ENCODE measurements at regions of chr16 and their contacts with region 1.

Region 1: DNA sequence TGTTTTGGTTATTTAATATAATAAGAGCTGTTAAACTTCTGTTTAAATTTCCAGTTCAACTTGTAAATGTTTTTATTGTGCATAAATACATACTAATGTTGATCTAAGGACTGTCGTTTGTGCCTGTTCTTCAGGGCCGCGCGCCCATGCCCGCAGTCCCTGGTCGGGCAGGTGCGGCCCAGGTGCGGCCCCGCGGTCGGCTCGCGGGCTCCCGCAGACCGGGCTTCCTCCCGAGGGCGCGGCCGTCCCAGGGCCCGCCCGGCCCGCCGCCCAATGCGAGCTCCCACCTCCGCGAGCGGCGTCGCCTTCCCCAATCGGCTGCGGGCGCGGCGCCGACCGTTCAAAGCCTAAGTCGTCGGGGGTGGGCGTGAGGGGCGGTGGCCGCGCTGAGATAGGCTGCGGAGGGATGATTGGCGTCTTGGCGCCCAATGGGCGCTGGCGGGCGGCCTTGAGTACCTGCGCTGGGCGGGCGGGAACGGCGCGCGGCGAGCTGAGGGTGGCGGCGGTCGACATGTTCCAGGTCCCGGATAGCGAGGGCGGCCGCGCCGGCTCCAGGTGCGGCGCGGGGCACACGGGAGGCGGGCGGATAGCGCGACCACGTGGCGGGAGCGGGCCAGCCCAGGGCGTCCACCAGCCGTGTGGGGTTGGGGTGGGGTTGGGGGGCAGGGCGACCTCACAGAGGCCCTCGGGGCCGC is at the start of gene JPT2:
- DNase-seq: peak; percentile 98
- H3K4me3 Mint-ChIP-seq: peak within 1 kb of the TSS; percentile 97
- H3K27ac Mint-ChIP-seq: peak within 1 kb of the TSS; percentile 79
- H3K4me1 Mint-ChIP-seq: peaks cover 29% of the 10 kb centered on the region
- H3K27me3 Mint-ChIP-seq: no peaks in the 10 kb centered on the region
- total RNA-seq, gene JPT2: 62.1 to 65.9 TPM

Region 2: GRCh38 chr16:1645914-1646525 is 31.9 kb before region 1 on chr16:
- CTCF ChIA-PET with region 1: no interaction called
- POLR2A ChIA-PET with region 1: no interaction called
- intact Hi-C with region 1: loop called (anchors 2 kb)
- DNase-seq: peak; percentile 57
- H3K4me3 Mint-ChIP-seq: no peak overlapping the region
- H3K27ac Mint-ChIP-seq: peak overlapping the region; percentile 55
- H3K4me1 Mint-ChIP-seq: peaks cover 18% of the 10 kb centered on the region
- H3K27me3 Mint-ChIP-seq: no peaks in the 10 kb centered on the region

Region 3: GRCh38 chr16:1656808-1657617 is 20.9 kb before region 1 on chr16:
- CTCF ChIA-PET with region 1: no interaction called
- POLR2A ChIA-PET with region 1: no interaction called
- intact Hi-C with region 1: no loop called
- DNase-seq: no peak
- H3K4me3 Mint-ChIP-seq: no peak overlapping the region
- H3K27ac Mint-ChIP-seq: no peak overlapping the region
- H3K4me1 Mint-ChIP-seq: no peaks in the 10 kb centered on the region
- H3K27me3 Mint-ChIP-seq: no peaks in the 10 kb centered on the region

Region 4: DNA sequence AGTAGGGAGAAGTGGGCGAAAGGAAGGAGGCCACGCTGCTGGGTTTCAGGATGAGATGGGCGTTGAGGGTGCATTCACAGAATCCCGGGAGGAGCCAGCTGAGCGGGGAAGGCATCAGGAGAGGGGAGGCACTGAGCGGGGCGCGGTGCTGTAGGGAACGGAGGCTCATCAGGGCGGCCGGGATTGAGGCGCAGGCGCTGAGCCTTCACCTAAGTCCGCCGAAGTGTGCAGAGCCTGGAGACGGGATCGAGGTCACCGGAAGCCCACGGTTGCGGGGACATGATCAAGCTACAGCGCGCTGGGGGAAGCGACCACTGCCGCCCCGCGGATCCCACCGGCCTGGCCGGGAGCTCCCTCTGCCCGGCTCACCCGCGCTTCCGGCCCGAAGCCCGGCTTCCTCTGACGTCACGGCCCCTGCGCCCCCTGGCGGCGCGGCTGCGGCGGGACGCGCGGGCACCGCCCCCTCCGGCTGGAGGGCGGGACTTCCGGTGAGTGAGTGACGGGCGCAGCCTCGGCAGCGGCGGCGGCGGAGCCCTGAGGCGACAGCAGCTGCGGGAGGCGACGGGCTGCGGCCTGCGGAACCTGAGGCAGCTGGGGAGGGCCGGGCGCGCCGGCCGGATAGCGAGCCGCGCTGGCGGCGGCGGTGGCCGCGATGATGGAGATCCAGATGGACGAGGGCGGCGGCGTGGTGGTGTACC is 27.9 kb after region 1 on chr16 and contains the start of gene MAPK8IP3:
- CTCF ChIA-PET with region 1: interaction called, 22 read pairs
- POLR2A ChIA-PET with region 1: interaction called, 18 read pairs
- intact Hi-C with region 1: loop called (anchors 2 kb)
- DNase-seq: peak; percentile 95
- H3K4me3 Mint-ChIP-seq: peak within 1 kb of the TSS; percentile 96
- H3K27ac Mint-ChIP-seq: peak within 1 kb of the TSS; percentile 92
- H3K4me1 Mint-ChIP-seq: peaks cover 33% of the 10 kb centered on the region
- H3K27me3 Mint-ChIP-seq: no peaks in the 10 kb centered on the region
- total RNA-seq, gene MAPK8IP3: 51.7 to 56.8 TPM

Region 5: GRCh38 chr16:1723450-1724147 is 45.6 kb after region 1 on chr16:
- CTCF ChIA-PET with region 1: interaction called, 3 read pairs
- POLR2A ChIA-PET with region 1: no interaction called
- intact Hi-C with region 1: loop called (anchors 1 kb)
- DNase-seq: peak; percentile 53
- H3K4me3 Mint-ChIP-seq: no peak overlapping the region
- H3K27ac Mint-ChIP-seq: peak overlapping the region; percentile 49
- H3K4me1 Mint-ChIP-seq: peaks cover 24% of the 10 kb centered on the region
- H3K27me3 Mint-ChIP-seq: no peaks in the 10 kb centered on the region

Measured in activated CD4-positive, alpha-beta memory T cell treated with anti-CD3 and anti-CD28 coated beads for 36 hours (primary cell).